ENCODE measurements at regions of chr6 and their contacts with region 1.

Region 1: GRCh38 chr6:116596815-116597214 is 19.5 kb upstream of the RSPH4A start:
- DNase-seq: peak; percentile 42
- ATAC-seq: peak; percentile 51; the same call in 1 of the 2 replicates
- H3K4me3 ChIP-seq: no peak overlapping the region
- H3K27ac ChIP-seq: no peak overlapping the region
- H3K4me1 ChIP-seq: no peaks in the 10 kb centered on the region
- H3K27me3 ChIP-seq: no peaks in the 10 kb centered on the region
- CTCF ChIP-seq: no peak
- POLR2A ChIP-seq: no peak
- RAD21 ChIP-seq: no peak

Region 2: GRCh38 chr6:116611056-116611455 is 14.2 kb after region 1 on chr6:
- CTCF ChIA-PET with region 1: no interaction called
- POLR2A ChIA-PET with region 1: no interaction called
- dilution Hi-C with region 1: no loop called
- in situ Hi-C with region 1: no loop called
- intact Hi-C with region 1: loop called (anchors 1 kb)
- DNase-seq: no peak
- ATAC-seq: no peak
- H3K4me3 ChIP-seq: no peak overlapping the region
- H3K27ac ChIP-seq: no peak overlapping the region
- H3K4me1 ChIP-seq: 0 out of 2 replicates have a peak, but pooled peaks cover 1% of the 10 kb centered on the region
- H3K27me3 ChIP-seq: no peaks in the 10 kb centered on the region
- CTCF ChIP-seq: no peak
- POLR2A ChIP-seq: no peak
- RAD21 ChIP-seq: no peak

Measured in IMR-90 (cell line).